Common myeloid progenitor, CD34-positive (primary cell): ENCODE measurements at regions of chr6 and their contacts with region 1.

Region 1: DNA sequence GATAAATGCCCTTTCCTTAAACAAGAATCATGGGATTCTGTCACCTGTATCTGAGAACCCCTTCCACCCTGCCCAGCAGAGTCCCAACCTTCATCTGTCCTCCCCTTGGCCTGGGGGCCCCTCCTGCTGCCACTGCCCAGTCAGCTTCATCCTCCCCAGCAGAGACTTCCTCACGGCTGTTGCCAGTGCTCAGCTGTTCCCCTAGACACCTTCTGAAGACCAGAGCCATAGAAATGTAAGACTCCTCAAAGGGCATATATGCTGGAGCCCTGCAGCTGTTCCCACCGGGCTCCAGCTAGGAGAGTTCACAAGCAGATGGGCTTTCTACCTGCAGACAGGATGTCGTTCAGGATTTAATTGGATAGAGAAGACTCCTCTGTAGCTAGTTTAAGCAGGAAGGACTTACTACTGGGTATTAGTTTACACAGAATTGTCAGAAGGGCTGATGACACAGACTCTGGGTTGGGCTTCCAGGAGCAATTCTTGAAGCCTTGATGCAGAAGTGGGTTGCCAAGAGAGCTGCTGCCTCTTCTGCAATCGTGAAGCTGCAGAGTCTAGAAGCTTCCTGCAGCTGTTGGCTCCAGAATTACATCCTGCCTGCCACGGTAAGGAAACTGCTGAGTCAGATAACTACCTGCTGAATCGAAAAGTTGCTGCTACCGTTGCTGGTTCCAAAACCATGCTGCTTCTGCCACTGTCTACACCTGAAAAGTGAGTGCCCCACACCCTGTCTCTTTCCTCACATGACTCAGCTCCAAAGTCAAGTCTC is 57.1 kb upstream of the MLN start:
- DNase-seq: peak; percentile 86 to 98 (median 97)
- H3K4me3 ChIP-seq: no peak overlapping the region
- H3K27ac ChIP-seq: no peak overlapping the region
- H3K4me1 ChIP-seq: peaks cover 2 to 49% (median 44%) of the 10 kb centered on the region in 4 experiments
- H3K27me3 ChIP-seq: peaks cover 0 to 34% (median 19%) of the 10 kb centered on the region in 5 experiments

Region 2: DNA sequence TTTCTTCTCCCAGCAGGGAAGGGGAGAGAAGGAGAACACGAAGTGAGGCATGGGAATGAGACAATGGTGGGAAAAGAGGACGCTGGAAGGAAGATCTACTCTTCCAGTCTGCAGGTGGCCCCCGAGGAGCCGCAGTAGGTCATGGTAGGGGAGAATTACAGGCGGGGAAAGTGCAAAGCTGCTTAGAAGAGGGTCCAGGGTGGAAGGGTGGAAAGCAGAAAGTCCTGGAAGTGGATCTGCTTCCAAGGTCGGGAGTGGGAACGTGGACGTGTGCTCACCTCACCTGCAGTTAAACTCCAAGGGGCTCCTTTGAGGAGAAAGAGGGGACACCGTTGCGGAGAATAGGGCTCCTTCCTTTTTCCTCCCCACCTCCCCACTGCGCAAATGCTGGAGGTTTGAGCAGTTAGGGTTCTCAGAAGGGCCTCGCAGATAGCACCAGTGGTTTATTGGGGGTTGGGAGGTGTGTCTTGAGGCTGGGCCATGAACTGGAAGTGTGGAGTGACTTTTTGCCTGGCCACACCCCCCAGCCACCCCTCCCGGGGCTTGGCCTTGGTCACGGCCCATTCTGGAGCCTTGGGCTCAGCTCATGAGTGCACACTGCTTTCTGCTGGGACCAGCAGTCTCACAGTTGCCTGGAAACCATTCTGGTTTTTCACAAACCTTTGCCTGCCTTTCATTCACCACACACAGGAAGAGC is 43.3 kb after region 1 on chr6:
- CTCF ChIA-PET with region 1: interaction called, 8 read pairs
- POLR2A ChIA-PET with region 1: interaction called, 13 read pairs
- DNase-seq: peak; percentile 86 to 98 (median 96)
- H3K4me3 ChIP-seq: peak overlapping the region in 4 of 7 experiments; percentile 20 to 54 (median 28)
- H3K27ac ChIP-seq: peak overlapping the region; percentile 71 to 77
- H3K4me1 ChIP-seq: peaks cover 7 to 85% (median 71%) of the 10 kb centered on the region in 4 experiments
- H3K27me3 ChIP-seq: no peaks in the 10 kb centered on the region